ENCODE measurements at regions of chr16 and their contacts with region 1.

Region 1: GRCh38 chr16:71648162-71648561 is 22.2 kb downstream of the MARVELD3 start:
- DNase-seq: no peak

Region 2: DNA sequence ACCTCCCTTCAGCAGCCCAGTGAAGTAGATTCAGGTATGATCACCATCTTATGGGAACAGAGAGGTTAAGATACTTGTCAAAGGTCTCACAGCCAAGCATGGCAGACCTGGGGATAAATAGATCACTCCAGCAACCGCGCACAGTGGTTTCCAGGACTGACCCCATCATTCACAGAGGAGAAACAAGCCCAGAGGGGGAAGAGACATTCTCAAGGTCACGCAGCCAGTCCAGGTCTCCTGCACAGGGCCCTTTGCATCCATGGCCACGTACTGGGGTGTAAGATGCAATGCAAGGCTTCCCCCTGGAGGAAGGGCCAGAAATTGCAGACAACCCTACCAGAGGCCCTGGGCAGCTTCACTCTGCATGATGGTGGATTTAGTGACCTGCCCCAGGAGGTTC is 226.3 kb before region 1 on chr16:
- CTCF ChIA-PET with region 1: no interaction called
- POLR2A ChIA-PET with region 1: no interaction called
- DNase-seq: peak; percentile 59

Region 3: DNA sequence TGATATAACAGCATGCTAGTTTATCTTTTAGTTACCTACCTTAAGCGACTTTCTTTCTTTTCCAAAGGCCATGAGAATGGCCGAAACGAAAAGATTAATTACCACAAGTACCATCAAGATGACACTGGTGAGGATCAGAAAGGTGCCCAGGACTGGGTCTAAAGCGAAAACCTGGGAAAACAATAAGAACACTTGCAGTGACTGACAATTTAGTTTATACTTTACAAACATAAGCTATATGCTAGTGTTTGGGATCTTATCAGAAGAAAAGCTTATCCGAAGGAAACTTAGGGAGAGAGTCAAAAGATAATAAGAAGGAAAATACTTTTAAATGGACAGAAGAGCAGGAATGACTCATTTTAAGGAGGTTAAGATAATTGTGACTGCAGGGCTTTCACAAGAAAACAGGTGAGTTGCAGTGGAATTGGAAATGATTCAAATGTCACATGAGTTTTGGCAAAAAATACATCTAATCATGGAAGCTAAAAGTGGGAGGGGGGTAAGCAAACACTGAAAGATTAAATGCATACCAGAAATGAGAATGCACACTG is 281.9 kb after region 1 on chr16:
- CTCF ChIA-PET with region 1: interaction called, 14 read pairs
- POLR2A ChIA-PET with region 1: no interaction called
- DNase-seq: no peak